Body of pancreas (tissue), 4 donors: ENCODE measurements at regions of chr18 and their contacts with region 1.

Region 1: GRCh38 chr18:23593720-23594119 is 7.4 kb upstream of the NPC1 start:
- DNase-seq: no peak
- ATAC-seq: no peak
- H3K4me3 ChIP-seq: no peak overlapping the region
- H3K27ac ChIP-seq: no peak overlapping the region
- H3K4me1 ChIP-seq: no peaks in the 10 kb centered on the region
- H3K27me3 ChIP-seq: no peaks in the 10 kb centered on the region
- CTCF ChIP-seq: no peak
- POLR2A ChIP-seq: no peak

Region 2: GRCh38 chr18:23532848-23533247 is 60.9 kb before region 1 on chr18:
- intact Hi-C with region 1: loop called (anchors 10 kb)
- DNase-seq: no peak
- ATAC-seq: no peak
- H3K4me3 ChIP-seq: no peak overlapping the region
- H3K27ac ChIP-seq: no peak overlapping the region
- H3K4me1 ChIP-seq: no peaks in the 10 kb centered on the region
- H3K27me3 ChIP-seq: no peaks in the 10 kb centered on the region
- CTCF ChIP-seq: no peak
- POLR2A ChIP-seq: no peak